IMR-90 (cell line): ENCODE measurements at regions of chr6 and their contacts with region 1.

Region 1: GRCh38 chr6:17959302-17959701 is 28.1 kb downstream of the KIF13A start:
- DNase-seq: peak; percentile 79
- ATAC-seq: peak; percentile 50
- H3K4me3 ChIP-seq: no peak overlapping the region
- H3K27ac ChIP-seq: peak overlapping the region; percentile 78; the same call in 1 of the 2 replicates
- H3K4me1 ChIP-seq: peaks cover 17% of the 10 kb centered on the region
- H3K27me3 ChIP-seq: no peaks in the 10 kb centered on the region
- CTCF ChIP-seq: no peak
- POLR2A ChIP-seq: no peak
- RAD21 ChIP-seq: no peak

Region 2: GRCh38 chr6:18004256-18004985 is 45.1 kb after region 1 on chr6:
- CTCF ChIA-PET with region 1: no interaction called
- POLR2A ChIA-PET with region 1: no interaction called
- dilution Hi-C with region 1: no loop called
- in situ Hi-C with region 1: no loop called
- intact Hi-C with region 1: no loop called
- DNase-seq: no peak
- ATAC-seq: no peak
- H3K4me3 ChIP-seq: no peak overlapping the region
- H3K27ac ChIP-seq: no peak overlapping the region
- H3K4me1 ChIP-seq: peaks cover 4% of the 10 kb centered on the region; the same call in 1 of the 2 replicates
- H3K27me3 ChIP-seq: no peaks in the 10 kb centered on the region
- CTCF ChIP-seq: no peak
- POLR2A ChIP-seq: no peak
- RAD21 ChIP-seq: no peak

Region 3: DNA sequence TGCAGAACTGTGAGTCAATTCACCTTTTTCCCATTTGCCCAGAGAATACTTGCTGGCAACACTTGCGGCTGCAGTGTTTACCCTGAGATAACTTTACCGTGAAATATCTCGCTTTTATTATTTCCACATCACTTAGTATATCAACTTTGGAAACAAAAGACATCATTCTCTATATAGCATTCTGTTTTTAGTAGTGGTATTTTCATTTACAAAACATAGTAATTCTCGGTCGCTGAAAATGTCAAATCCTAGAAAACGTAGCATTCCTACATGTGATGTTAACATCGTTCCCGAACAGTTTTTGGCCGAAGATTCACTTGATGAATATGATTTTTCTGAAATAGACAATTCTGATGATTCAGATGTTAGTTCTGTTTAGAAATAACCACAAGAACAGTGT is 111.2 kb after region 1 on chr6:
- CTCF ChIA-PET with region 1: no interaction called
- POLR2A ChIA-PET with region 1: interaction called, 10 read pairs
- dilution Hi-C with region 1: no loop called
- in situ Hi-C with region 1: no loop called
- intact Hi-C with region 1: no loop called
- DNase-seq: no peak
- ATAC-seq: no peak
- H3K4me3 ChIP-seq: no peak overlapping the region
- H3K27ac ChIP-seq: no peak overlapping the region
- H3K4me1 ChIP-seq: no peaks in the 10 kb centered on the region
- H3K27me3 ChIP-seq: peaks cover 2% of the 10 kb centered on the region
- CTCF ChIP-seq: no peak
- POLR2A ChIP-seq: no peak
- RAD21 ChIP-seq: no peak